Posterior cingulate gyrus (tissue), 11 donors: ENCODE measurements at regions of chr10 and their contacts with region 1.

Region 1: GRCh38 chr10:59847326-59847725 is 59.0 kb downstream of the CCDC6 start:
- DNase-seq: no peak

Region 2: DNA sequence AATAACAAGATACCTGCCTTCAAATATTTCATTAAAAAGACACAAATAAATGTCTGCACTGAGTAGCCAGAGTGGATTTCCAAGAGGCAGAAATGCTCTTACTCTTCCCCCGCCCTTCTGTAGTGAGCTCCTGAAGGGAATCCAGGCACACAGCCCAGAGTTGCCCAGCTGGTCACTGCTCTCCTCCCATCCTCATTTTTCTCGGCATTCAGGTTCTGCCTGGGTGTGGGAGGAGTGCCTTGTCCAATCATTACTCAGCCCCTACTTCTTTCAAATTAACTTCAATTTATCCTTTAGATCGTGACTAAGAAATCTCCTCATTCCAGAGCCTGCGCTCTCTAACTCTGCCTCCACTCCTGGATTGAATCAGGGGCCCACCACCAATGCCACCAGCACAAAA is 46.8 kb after region 1 on chr10:
- intact Hi-C with region 1: loop called (anchors 10 kb)
- DNase-seq: peak; percentile 42 to 95 (median 70)

Region 3: DNA sequence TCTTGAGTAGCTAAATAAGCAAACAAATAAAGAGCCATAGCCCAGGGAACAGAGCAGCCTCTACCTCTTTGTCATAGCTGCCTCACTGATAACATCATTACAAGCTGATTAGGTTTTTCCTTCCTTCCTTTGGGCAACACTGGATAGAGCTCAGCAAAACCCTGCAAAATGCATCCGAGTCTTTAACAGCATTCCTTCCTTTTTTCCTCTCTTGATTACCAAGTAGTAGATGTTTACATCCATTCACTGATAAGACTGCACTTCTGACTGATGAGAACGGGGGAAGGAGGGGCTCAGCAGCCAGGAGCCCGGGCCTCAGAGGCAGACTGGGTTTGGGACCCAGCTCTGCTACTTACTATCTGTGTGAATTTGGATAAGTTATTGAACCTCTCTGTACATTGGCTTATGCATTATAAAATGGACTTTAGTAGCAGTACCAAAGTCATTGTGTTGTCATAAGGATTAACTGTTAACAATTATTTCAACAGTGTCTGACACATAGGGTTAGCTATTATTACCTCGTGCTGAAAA is 328.2 kb after region 1 on chr10:
- intact Hi-C with region 1: no loop called
- DNase-seq: no peak